Activated CD8-positive, alpha-beta T cell treated with anti-CD3 and anti-CD28 coated beads for 36 hours (primary cell): ENCODE measurements at regions of chr6 and their contacts with region 1.

Region 1: GRCh38 chr6:17584241-17584803 is 15.8 kb upstream of the FAM8A1 start:
- DNase-seq: no peak
- ATAC-seq: peak; percentile 55
- H3K4me3 Mint-ChIP-seq: no peak overlapping the region
- H3K27ac Mint-ChIP-seq: no peak overlapping the region
- H3K4me1 Mint-ChIP-seq: peaks cover 11% of the 10 kb centered on the region
- H3K27me3 Mint-ChIP-seq: peaks cover 7% of the 10 kb centered on the region
- CTCF ChIP-seq: peak; percentile 83

Region 2: DNA sequence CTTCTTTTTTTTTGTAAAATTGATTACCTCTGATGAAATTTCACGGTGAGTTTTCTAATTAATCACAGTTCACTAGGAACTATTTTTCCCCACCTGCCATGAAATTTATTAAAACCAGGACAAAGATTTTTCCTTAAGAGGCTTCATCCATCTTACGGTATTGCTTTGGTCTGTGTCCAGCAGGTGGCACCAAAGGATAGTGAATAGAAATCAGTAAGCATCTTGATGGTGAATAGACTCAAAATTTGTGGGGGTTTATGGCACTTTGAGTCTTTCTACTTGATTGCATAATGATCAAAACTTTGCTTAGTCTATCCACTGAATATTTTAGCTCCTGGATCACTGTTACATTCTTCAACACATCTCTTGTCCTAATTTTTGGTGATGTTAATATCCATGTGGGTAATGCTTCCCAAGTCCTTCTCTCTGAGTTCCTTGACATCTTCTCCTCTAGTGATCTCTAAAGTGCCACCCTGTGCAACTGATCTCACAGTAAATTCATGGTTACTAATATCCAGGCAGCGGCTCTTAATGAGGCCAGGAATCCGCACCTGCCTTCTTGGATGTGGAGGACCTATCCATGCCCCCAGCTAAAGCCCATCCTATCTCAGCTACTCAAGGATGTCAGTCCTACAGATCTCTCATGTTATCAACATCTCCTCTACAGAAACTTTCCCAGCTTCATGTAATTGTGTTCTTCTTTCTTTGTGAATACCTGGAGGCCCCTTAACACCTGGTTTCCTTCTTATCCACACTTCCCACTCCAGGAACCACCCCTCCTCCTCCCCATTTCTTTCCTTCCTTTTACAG is 428.0 kb before region 1 on chr6:
- CTCF ChIA-PET with region 1: interaction called, 19 read pairs
- POLR2A ChIA-PET with region 1: no interaction called
- intact Hi-C with region 1: loop called (anchors 1 kb)
- DNase-seq: peak; percentile 78
- ATAC-seq: no peak
- H3K4me3 Mint-ChIP-seq: no peak overlapping the region
- H3K27ac Mint-ChIP-seq: no peak overlapping the region
- H3K4me1 Mint-ChIP-seq: no peaks in the 10 kb centered on the region
- H3K27me3 Mint-ChIP-seq: peaks cover 8% of the 10 kb centered on the region
- CTCF ChIP-seq: peak; percentile 86

Region 3: GRCh38 chr6:17224056-17224455 is 360.3 kb before region 1 on chr6:
- CTCF ChIA-PET with region 1: no interaction called
- POLR2A ChIA-PET with region 1: no interaction called
- intact Hi-C with region 1: no loop called
- DNase-seq: no peak
- ATAC-seq: no peak
- H3K4me3 Mint-ChIP-seq: no peak overlapping the region
- H3K27ac Mint-ChIP-seq: no peak overlapping the region
- H3K4me1 Mint-ChIP-seq: no peaks in the 10 kb centered on the region
- H3K27me3 Mint-ChIP-seq: peaks cover under 1% of the 10 kb centered on the region
- CTCF ChIP-seq: no peak

Region 4: GRCh38 chr6:17505062-17505476 is 79.3 kb before region 1 on chr6:
- CTCF ChIA-PET with region 1: interaction called, 17 read pairs
- POLR2A ChIA-PET with region 1: no interaction called
- intact Hi-C with region 1: no loop called
- DNase-seq: no peak
- ATAC-seq: no peak
- H3K4me3 Mint-ChIP-seq: no peak overlapping the region
- H3K27ac Mint-ChIP-seq: no peak overlapping the region
- H3K4me1 Mint-ChIP-seq: no peaks in the 10 kb centered on the region
- H3K27me3 Mint-ChIP-seq: no peaks in the 10 kb centered on the region
- CTCF ChIP-seq: no peak

Region 5: GRCh38 chr6:17820055-17820454 is 235.7 kb after region 1 on chr6:
- CTCF ChIA-PET with region 1: interaction called, 8 read pairs
- POLR2A ChIA-PET with region 1: no interaction called
- intact Hi-C with region 1: loop called (anchors 5 kb)
- DNase-seq: no peak
- ATAC-seq: no peak
- H3K4me3 Mint-ChIP-seq: no peak overlapping the region
- H3K27ac Mint-ChIP-seq: no peak overlapping the region
- H3K4me1 Mint-ChIP-seq: no peaks in the 10 kb centered on the region
- H3K27me3 Mint-ChIP-seq: peaks cover 13% of the 10 kb centered on the region
- CTCF ChIP-seq: no peak